Dendritic cell treated with granulocyte-macrophage colony-stimulating factor and Interleukin-4, amounts not matched to agents 40 ng/mL and 50 ng/mL, for 4 days (primary cell): ENCODE measurements at regions of chr1 and their contacts with region 1.

Region 1: DNA sequence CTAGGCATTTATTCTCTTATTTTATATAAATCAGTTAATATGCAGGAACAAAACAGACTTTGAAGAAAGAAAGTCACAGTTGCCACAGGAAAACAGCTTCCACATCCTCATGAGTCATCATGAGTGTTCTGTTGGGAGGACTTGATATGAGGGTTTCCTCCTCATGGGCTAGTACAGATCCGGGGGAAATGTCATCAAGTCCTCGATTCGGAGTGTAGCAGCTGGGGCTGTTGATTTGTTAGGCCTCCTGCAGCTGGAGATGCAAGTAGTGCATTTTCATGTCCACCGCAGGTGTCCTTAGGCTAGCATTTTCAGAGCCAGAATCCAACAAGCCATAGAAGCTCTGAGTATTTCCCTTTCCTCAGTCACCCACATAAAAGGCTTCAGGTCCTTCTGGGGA is 36.7 kb downstream of the ADAM30 start:
- H3K4me3 Mint-ChIP-seq: no peak overlapping the region
- H3K27ac Mint-ChIP-seq: no peak overlapping the region
- H3K4me1 Mint-ChIP-seq: peaks cover 26% of the 10 kb centered on the region
- H3K27me3 Mint-ChIP-seq: no peaks in the 10 kb centered on the region

Region 2: GRCh38 chr1:119808972-119809550 is 50.6 kb before region 1 on chr1:
- intact Hi-C with region 1: loop called (anchors 10 kb)
- H3K4me3 Mint-ChIP-seq: no peak overlapping the region
- H3K27ac Mint-ChIP-seq: no peak overlapping the region
- H3K4me1 Mint-ChIP-seq: no peaks in the 10 kb centered on the region
- H3K27me3 Mint-ChIP-seq: peaks cover 7% of the 10 kb centered on the region